Colonic mucosa (tissue), 4 donors: ENCODE measurements at regions of chr3 and their contacts with region 1.

Region 1: DNA sequence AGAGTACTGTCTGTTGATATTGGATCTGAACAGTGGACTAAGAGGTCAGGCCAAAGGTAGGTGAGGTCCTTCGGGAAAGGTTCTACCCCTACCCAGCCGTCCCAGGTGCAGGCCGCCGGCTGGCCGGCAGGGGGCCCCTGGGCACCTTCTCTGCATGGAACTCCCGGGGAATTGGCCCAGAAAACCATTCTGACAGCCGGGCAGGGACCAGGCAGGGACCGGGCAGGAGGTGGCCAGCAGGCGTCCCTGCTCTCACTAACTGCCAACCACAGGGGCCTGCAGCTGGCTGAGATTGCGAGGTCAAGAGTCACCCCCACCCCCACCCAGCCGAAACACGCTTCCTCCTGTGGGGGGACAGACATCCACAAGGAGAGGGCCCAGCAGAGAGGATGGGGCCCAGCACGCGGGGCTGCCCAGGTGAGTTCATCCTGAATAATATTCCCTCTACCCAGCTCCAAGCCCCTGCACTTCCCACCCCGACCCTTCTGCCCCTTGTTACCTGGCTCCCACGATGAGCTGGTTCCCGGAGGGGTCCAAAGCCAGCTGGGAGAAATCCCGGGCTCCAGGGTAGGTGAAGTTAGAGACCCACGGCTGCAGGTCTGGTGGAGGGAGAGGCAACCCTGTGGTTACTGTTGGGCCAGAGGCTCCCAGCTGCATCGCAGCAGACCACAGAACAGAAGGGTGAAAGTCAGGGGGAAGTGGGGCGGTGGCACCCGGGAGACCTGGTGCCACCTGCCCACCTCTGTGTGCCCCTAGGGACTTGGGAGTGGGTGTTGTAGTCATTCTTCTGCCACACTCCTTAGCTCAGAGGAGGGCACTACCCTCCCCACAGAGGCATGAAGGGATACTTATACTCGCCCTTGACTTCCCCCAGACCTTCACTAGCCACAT is 84.4 kb downstream of the SEMA5B start:
- DNase-seq: peak; percentile 63
- H3K4me3 ChIP-seq: no peak overlapping the region
- H3K27ac ChIP-seq: no peak overlapping the region
- H3K4me1 ChIP-seq: no peaks in the 10 kb centered on the region
- H3K27me3 ChIP-seq: no peaks in the 10 kb centered on the region
- CTCF ChIP-seq: peak; percentile 93

Region 2: GRCh38 chr3:122609798-122610559 is 333.2 kb before region 1 on chr3:
- intact Hi-C with region 1: no loop called
- DNase-seq: no peak
- H3K4me3 ChIP-seq: no peak overlapping the region
- H3K27ac ChIP-seq: no peak overlapping the region
- H3K4me1 ChIP-seq: no peaks in the 10 kb centered on the region
- H3K27me3 ChIP-seq: no peaks in the 10 kb centered on the region
- CTCF ChIP-seq: no peak

Region 3: DNA sequence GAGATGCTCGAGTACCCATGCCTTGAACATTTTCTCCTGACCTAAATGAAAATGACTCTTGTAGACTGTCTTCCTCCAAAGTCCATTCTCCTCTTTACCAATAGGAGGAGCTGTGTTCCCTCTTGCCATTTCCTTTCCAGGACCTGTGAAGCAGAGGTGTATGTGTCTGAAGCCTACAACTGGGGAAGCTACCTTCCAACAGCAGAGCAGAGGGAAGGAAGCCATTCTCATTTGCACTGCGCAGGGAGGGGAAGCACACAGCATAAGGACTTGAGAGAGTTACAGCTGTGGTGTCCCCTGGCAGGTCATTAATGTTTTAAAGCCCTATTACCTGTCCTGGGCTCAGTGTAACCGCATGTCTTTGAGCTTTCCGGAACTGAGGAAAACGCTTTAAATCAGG is 188.3 kb before region 1 on chr3:
- intact Hi-C with region 1: loop called (anchors 10 kb)
- DNase-seq: peak; percentile 21
- H3K4me3 ChIP-seq: no peak overlapping the region
- H3K27ac ChIP-seq: no peak overlapping the region
- H3K4me1 ChIP-seq: no peaks in the 10 kb centered on the region
- H3K27me3 ChIP-seq: no peaks in the 10 kb centered on the region
- CTCF ChIP-seq: peak; percentile 77

Region 4: DNA sequence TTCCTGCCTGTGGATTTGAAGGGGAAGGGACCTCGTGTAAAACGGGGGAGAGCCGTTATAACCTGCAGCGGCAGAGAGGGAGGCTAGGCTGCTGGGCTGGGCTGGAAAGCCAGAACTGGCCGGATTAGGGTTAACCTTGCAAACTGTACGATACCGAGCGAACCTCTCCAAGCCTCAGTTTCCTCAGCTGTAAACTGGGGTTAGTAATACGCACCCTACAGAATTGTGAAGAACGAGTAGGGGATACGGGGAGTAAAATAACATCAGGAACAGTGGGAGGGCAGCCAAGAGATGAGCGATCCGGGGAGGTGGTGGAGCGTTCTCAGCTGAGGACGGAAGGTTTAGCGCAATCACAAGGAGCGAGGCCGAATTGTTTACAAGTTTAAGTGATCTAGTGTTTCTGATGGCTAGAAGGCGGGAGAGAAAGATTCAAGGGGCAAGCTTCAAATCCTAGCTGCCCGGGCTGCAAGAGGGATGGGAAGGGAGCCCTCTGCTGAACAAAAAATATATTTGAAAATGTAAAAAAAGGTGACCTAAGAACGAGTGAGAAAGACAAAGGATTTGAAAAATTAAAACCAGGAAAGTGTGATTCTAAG is 85.1 kb after region 1 on chr3:
- intact Hi-C with region 1: loop called (anchors 2 kb)
- DNase-seq: peak; percentile 27
- H3K4me3 ChIP-seq: peak overlapping the region; percentile 52
- H3K27ac ChIP-seq: no peak overlapping the region
- H3K4me1 ChIP-seq: peaks cover 10% of the 10 kb centered on the region
- H3K27me3 ChIP-seq: peaks cover 42% of the 10 kb centered on the region
- CTCF ChIP-seq: peak; percentile 29

Region 5: DNA sequence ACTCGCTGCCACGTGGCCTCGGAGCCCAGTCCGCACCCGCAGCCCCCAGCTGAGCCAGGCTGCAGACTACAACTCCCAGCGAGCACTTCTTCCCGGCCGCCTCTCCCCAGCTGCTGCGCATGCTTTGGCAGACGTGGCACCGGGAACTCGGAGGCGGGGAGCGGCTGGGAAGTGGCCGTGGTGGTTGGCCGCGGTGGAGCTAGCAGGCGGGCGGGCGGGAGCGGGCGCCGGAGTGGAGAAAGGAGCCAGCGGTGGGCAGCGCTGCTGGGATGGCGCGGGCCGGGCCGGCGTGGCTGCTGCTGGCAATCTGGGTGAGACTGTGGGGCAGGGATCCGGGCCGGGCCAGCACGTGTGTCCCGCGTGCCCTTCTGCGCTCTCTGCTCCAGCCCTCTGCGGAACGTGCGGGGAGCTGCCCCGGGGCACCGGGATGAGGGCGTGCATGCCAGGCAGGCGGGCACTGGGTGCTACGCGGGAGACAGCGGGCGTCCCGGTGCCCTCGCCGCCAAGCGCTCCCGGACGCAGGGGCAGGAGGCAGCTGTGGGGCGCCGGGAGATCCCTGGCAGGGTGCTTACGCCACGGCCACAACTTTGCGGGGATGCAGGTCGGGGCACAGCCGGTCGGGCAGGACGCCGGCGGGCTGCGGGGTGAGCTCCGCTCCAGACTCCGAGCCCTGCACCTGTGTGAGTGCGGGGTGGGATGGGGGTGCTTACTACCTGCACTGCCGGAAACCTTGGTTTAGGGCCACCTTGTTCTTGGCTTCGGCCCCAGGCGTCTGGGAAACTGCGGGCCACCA is 123.9 kb after region 1 on chr3 and contains the start of gene PDIA5:
- intact Hi-C with region 1: no loop called
- DNase-seq: peak; percentile 93
- H3K4me3 ChIP-seq: peak within 1 kb of the TSS; percentile 86
- H3K27ac ChIP-seq: peak within 1 kb of the TSS; percentile 62
- H3K4me1 ChIP-seq: peaks cover 4% of the 10 kb centered on the region
- H3K27me3 ChIP-seq: no peaks in the 10 kb centered on the region
- CTCF ChIP-seq: no peak
- total RNA-seq, gene PDIA5: 36.5 to 40.1 TPM

Region 6: DNA sequence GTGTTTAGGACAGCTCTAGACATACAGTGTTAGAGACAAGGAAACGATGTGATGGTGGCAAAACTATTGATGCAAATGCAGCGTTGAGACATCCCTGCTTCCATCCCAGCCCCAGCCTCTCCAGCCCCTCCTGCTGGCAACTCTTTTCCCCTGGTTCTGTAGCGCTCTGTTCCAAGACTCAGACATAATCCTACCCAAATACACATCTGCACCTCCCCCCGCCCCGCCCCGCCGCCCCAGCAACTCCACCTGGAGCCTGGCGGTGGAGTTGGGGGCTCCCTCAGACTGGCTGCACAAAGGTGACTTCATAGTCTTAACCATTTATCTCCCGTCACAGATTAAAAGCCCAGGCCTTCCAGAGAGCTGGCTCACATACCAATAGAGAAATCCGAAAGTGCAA is 251.4 kb after region 1 on chr3:
- intact Hi-C with region 1: loop called (anchors 10 kb)
- DNase-seq: peak; percentile 32
- H3K4me3 ChIP-seq: no peak overlapping the region
- H3K27ac ChIP-seq: no peak overlapping the region
- H3K4me1 ChIP-seq: no peaks in the 10 kb centered on the region
- H3K27me3 ChIP-seq: no peaks in the 10 kb centered on the region
- CTCF ChIP-seq: peak; percentile 36

Region 7: GRCh38 chr3:123258811-123259420 is 315.7 kb after region 1 on chr3:
- intact Hi-C with region 1: loop called (anchors 10 kb)
- DNase-seq: no peak
- H3K4me3 ChIP-seq: no peak overlapping the region
- H3K27ac ChIP-seq: no peak overlapping the region
- H3K4me1 ChIP-seq: no peaks in the 10 kb centered on the region
- H3K27me3 ChIP-seq: no peaks in the 10 kb centered on the region
- CTCF ChIP-seq: peak; percentile 47